Left colon (tissue), 2 donors: ENCODE measurements at regions of chr14 and their contacts with region 1.

Region 1: GRCh38 chr14:52272375-52272774 is 4.9 kb downstream of the PTGDR start:
- DNase-seq: peak; percentile 36 to 37
- ATAC-seq: peak; percentile 37

Region 2: GRCh38 chr14:51989293-51990234 is 282.8 kb before region 1 on chr14 and contains the start of gene RTRAF:
- intact Hi-C with region 1: loop called in 1 of 2 experiments (anchors 10 kb)
- DNase-seq: peak; percentile 94 to 96
- ATAC-seq: peak; percentile 97
- total RNA-seq, gene RTRAF: 119 to 136 TPM